ENCODE measurements at regions of chr12 and their contacts with region 1.

Region 1: GRCh38 chr12:50533203-50533584 is 28.4 kb downstream of the DIP2B start:
- DNase-seq: no peak
- H3K4me3 Mint-ChIP-seq: no peak overlapping the region
- H3K27ac Mint-ChIP-seq: no peak overlapping the region
- H3K4me1 Mint-ChIP-seq: peaks cover 27% of the 10 kb centered on the region
- H3K27me3 Mint-ChIP-seq: no peaks in the 10 kb centered on the region

Region 2: DNA sequence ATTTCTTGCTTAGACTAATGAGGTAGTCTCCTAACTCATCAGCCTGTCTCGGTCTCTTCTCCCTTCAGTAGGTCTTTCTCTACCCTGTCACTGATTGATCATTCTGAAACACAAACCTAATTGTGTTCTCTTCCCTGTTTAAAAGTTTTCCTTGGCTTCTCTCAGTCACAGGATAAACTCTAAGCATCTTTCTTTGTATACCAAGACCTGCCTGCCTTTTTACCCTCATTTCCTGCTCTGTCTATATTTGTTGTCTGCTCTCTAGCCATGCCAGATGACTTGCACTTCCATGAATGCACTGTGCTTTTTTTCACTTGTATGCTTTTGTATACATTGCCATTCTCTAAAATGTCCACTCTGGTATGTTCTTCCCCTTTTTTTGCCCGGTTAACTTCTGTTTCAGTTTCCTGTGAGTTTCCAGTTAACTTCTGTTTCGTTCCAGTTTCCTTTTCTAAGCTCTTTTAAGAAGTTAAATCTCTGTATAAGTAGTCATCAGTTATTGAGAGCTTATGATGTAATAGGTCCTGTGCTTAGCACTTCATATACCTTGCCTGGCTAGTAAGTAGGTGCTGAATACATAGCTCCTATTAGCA is 15.6 kb before region 1 on chr12:
- intact Hi-C with region 1: loop called (anchors 1 kb)
- DNase-seq: no peak
- H3K4me3 Mint-ChIP-seq: no peak overlapping the region
- H3K27ac Mint-ChIP-seq: no peak overlapping the region
- H3K4me1 Mint-ChIP-seq: peaks cover 31% of the 10 kb centered on the region
- H3K27me3 Mint-ChIP-seq: no peaks in the 10 kb centered on the region

Region 3: GRCh38 chr12:50620109-50620977 is 87.1 kb after region 1 on chr12:
- intact Hi-C with region 1: loop called (anchors 5 kb)
- DNase-seq: no peak
- H3K4me3 Mint-ChIP-seq: no peak overlapping the region
- H3K27ac Mint-ChIP-seq: no peak overlapping the region
- H3K4me1 Mint-ChIP-seq: peaks cover 32% of the 10 kb centered on the region
- H3K27me3 Mint-ChIP-seq: no peaks in the 10 kb centered on the region

Region 4: DNA sequence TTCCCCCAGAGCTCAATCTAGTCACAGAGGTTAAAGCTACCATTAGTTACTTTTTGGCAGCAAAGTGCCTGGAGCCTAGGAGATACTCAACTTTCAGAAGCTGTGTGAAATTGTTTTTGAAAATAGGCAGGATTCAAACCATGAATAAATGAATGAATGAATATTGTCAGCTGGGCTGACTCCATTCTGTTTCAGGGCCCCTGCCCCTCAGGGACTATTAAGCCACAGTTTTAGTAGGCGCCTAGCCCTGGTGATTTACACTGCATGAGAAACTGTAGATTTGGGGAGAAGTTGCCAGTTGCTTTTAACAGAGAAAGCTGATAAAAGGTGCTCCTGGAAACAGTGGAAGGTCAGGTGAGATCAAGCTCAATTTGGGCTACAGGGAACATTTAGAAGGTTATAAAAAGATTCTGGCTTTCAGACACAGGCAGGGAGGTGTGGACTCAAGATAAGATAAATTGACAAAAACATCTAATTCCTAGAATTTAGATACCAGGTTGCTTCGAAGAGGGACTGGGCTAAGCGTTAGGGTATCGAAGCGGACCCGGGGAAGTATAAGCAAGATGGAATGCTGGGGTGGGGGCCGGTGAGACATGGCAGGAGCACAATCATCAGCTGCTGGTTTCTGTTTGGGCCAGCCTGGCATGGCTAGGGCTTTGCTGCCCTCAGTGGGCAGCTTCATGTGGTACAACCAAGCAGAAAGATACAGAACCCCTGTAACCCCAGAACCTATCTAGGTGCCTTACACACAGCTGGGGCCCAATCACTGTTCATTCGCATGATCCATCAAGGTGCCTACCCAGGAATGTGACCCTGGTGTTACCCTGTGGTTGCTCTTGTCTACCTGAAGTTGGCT is 828.2 kb after region 1 on chr12:
- intact Hi-C with region 1: loop called (anchors 5 kb)
- DNase-seq: no peak
- H3K4me3 Mint-ChIP-seq: no peak overlapping the region
- H3K27ac Mint-ChIP-seq: no peak overlapping the region
- H3K4me1 Mint-ChIP-seq: peaks cover 34% of the 10 kb centered on the region
- H3K27me3 Mint-ChIP-seq: peaks cover 5% of the 10 kb centered on the region